Activated CD4-positive, alpha-beta memory T cell treated with anti-CD3 and anti-CD28 coated beads for 36 hours (primary cell): ENCODE measurements at regions of chr3 and their contacts with region 1.

Region 1: DNA sequence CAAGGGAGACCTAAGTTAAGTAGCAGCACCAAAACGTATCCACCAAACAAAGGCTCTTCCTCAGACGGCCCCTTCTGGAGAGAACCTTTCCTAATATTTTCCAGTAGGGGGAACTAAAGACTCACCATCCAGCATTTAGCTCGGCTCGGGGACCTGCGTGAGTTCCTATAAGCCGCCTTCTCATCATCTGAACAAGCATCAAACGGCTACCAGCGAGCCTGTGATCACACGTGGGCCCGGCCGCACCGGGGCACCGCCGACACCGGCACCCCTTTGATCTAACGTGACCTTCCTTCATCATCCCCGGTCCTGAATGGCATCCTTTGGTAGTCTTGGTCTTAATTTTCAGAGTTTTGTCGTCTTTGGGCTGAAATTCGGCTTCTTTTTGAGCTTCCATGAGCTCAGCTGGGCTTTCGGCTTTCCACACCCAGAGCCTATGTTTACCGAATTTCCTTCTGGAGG is 1.4 kb upstream of the ROBO2 start:
- DNase-seq: peak; percentile 11
- H3K4me3 Mint-ChIP-seq: no peak overlapping the region
- H3K27ac Mint-ChIP-seq: no peak overlapping the region
- H3K4me1 Mint-ChIP-seq: no peaks in the 10 kb centered on the region
- H3K27me3 Mint-ChIP-seq: peaks cover 22% of the 10 kb centered on the region

Region 2: DNA sequence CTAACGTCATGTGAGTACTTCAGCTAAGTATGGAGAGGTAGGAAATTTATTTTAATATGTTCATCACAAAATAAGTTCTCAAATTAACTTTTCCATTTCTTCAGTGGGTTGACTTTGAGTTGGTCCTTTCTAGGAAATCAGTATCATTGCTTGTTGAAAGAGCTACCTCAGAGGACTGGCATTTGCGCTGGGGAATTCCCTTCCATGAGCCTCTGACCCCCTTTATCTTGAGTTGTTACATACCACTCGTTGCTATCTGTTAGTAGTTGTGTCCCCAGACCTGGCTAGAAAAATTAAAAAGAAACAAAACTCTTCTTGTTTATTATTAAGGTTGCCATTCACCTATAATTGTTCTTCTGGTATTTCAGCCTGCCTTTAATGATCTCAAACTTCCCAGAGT is 95.4 kb before region 1 on chr3:
- CTCF ChIA-PET with region 1: no interaction called
- POLR2A ChIA-PET with region 1: no interaction called
- intact Hi-C with region 1: no loop called
- DNase-seq: no peak
- H3K4me3 Mint-ChIP-seq: no peak overlapping the region
- H3K27ac Mint-ChIP-seq: no peak overlapping the region
- H3K4me1 Mint-ChIP-seq: no peaks in the 10 kb centered on the region
- H3K27me3 Mint-ChIP-seq: no peaks in the 10 kb centered on the region

Region 3: GRCh38 chr3:76986876-76987474 is 51.5 kb before region 1 on chr3:
- CTCF ChIA-PET with region 1: no interaction called
- POLR2A ChIA-PET with region 1: no interaction called
- intact Hi-C with region 1: no loop called
- DNase-seq: no peak
- H3K4me3 Mint-ChIP-seq: no peak overlapping the region
- H3K27ac Mint-ChIP-seq: no peak overlapping the region
- H3K4me1 Mint-ChIP-seq: no peaks in the 10 kb centered on the region
- H3K27me3 Mint-ChIP-seq: no peaks in the 10 kb centered on the region

Region 4: DNA sequence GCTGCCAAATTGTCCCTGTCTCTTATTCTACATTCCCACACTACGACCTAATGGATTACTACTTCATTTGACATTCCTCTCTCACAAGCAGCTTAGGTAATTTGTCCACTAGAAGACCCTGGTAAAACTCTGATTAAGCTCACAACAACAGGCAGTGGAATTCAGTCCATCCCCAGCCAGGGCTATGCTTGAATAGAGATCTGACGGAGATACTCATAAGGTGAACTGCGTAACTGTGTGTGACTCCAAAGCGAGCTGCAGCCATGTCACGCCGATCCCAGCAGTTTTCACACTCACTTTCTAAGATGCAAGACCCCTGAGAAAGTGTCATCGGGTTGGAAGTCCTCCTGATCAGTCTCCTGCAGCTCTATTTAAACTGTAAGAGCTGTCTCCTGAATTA is 24.3 kb before region 1 on chr3:
- CTCF ChIA-PET with region 1: no interaction called
- POLR2A ChIA-PET with region 1: no interaction called
- intact Hi-C with region 1: no loop called
- DNase-seq: no peak
- H3K4me3 Mint-ChIP-seq: no peak overlapping the region
- H3K27ac Mint-ChIP-seq: no peak overlapping the region
- H3K4me1 Mint-ChIP-seq: no peaks in the 10 kb centered on the region
- H3K27me3 Mint-ChIP-seq: no peaks in the 10 kb centered on the region

Region 5: GRCh38 chr3:78645628-78646310 is 1607.3 kb after region 1 on chr3:
- CTCF ChIA-PET with region 1: no interaction called
- POLR2A ChIA-PET with region 1: no interaction called
- intact Hi-C with region 1: loop called (anchors 5 kb)
- DNase-seq: no peak
- H3K4me3 Mint-ChIP-seq: no peak overlapping the region
- H3K27ac Mint-ChIP-seq: no peak overlapping the region
- H3K4me1 Mint-ChIP-seq: no peaks in the 10 kb centered on the region
- H3K27me3 Mint-ChIP-seq: no peaks in the 10 kb centered on the region